Tibial artery (tissue), 4 donors: ENCODE measurements at regions of chr3 and their contacts with region 1.

Region 1: GRCh38 chr3:172341482-172342059 is 106.7 kb downstream of the GHSR start:
- DNase-seq: no peak
- H3K4me3 ChIP-seq: no peak overlapping the region
- H3K27ac ChIP-seq: no peak overlapping the region
- H3K4me1 ChIP-seq: no peaks in the 10 kb centered on the region
- H3K27me3 ChIP-seq: no peaks in the 10 kb centered on the region
- CTCF ChIP-seq: peak; percentile 71 to 74

Region 2: GRCh38 chr3:171646357-171647133 is 695.0 kb before region 1 on chr3:
- intact Hi-C with region 1: no loop called
- DNase-seq: no peak
- H3K4me3 ChIP-seq: no peak overlapping the region
- H3K27ac ChIP-seq: peak overlapping the region; percentile 3 to 34
- H3K4me1 ChIP-seq: peaks cover 0 to 30% (median 3%) of the 10 kb centered on the region in 4 donors
- H3K27me3 ChIP-seq: no peaks in the 10 kb centered on the region
- CTCF ChIP-seq: peak; percentile 68 to 82

Region 3: GRCh38 chr3:171788546-171789351 is 552.8 kb before region 1 on chr3:
- intact Hi-C with region 1: loop called (anchors 10 kb)
- DNase-seq: no peak
- H3K4me3 ChIP-seq: no peak overlapping the region
- H3K27ac ChIP-seq: no peak overlapping the region
- H3K4me1 ChIP-seq: no peaks in the 10 kb centered on the region
- H3K27me3 ChIP-seq: no peaks in the 10 kb centered on the region
- CTCF ChIP-seq: no peak

Region 4: GRCh38 chr3:172239218-172239790 is 102.3 kb before region 1 on chr3:
- intact Hi-C with region 1: no loop called
- DNase-seq: no peak
- H3K4me3 ChIP-seq: no peak overlapping the region
- H3K27ac ChIP-seq: no peak overlapping the region
- H3K4me1 ChIP-seq: peaks cover 0 to 24% (median 6%) of the 10 kb centered on the region in 4 donors
- H3K27me3 ChIP-seq: no peaks in the 10 kb centered on the region
- CTCF ChIP-seq: no peak

Region 5: DNA sequence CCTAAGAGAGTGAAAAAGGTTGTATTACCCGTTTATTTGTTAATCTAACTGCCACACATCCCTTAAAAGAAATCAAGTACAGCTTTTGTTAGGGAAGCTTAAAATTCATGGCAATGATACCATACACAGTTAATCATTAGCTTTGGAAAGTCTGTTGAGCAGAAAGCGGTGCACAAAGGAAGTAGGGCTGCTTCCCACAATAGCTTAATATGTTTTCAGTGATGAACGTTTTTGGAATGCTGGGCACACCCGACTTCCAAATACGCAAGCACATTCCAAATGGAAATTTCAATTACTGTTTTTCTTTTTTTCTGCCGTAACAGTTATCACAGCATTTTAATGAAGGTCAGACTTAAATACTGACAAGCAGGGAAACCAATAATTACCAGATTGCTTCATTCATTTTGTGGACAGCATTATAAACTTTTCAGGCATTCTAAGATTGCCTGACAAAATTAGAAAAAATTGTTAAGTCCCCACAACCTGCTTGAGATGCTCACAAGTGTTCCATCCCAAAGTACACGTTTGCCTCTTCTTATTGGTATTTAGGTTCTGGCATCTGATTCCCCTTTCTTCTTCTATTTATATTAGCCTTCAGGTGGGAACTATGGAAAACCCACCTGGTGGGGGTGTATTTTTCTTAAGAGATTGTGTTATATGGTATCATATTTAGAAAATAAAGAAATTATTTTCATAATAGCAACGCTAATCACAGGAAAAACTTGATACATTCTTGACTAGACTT is 407.8 kb after region 1 on chr3:
- intact Hi-C with region 1: no loop called
- DNase-seq: no peak
- H3K4me3 ChIP-seq: peak overlapping the region; percentile 73 to 84
- H3K27ac ChIP-seq: peak overlapping the region; percentile 76
- H3K4me1 ChIP-seq: peaks cover 0 to 18% (median 11%) of the 10 kb centered on the region in 4 donors
- H3K27me3 ChIP-seq: no peaks in the 10 kb centered on the region
- CTCF ChIP-seq: no peak